ENCODE measurements at regions of chr12 and their contacts with region 1.

Region 1: GRCh38 chr12:110563702-110564640 is 19.1 kb downstream of the PPTC7 start:
- DNase-seq: no peak
- ATAC-seq: peak; percentile 35
- H3K4me3 Mint-ChIP-seq: peak overlapping the region; percentile 3
- H3K27ac Mint-ChIP-seq: peak overlapping the region; percentile 93
- H3K4me1 Mint-ChIP-seq: peaks cover 67% of the 10 kb centered on the region
- H3K27me3 Mint-ChIP-seq: no peaks in the 10 kb centered on the region
- CTCF ChIP-seq: no peak

Region 2: DNA sequence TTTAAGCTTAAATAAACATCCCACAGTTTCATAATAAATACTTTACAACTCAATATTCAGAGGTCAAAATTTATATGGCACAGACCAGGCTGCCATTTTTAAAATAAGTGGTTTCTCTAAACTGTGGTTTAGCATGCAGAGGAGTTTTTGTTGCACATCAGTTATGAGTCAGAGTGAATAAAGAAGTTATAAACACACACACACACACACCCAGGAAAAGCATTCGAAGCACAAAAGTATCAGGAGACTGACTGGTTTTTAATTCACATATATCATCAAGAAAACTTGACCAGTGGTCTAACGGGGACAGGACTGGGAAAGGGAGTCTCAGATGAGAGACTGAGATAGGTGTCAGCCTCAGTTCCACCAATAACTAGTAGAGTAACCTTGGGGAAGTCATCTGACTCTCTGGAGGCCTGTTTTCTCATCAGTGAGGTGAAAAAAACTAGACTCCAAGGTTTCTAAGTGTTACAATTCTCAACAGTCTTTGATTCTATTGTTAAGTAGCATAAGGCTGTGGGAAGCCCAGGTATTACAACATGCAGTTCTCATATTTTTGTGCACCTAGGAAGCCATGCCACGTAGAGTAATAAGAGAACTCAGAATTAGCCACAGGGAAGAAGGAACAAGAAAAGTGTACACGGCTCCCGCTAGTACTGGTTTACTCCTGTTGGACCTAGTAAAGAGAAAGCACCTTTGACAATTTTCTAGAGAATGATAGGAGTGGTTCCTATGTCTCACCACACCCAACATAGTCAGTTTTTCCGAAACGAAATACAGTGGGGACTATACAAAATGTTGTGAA is 13.9 kb after region 1 on chr12:
- CTCF ChIA-PET with region 1: interaction called, 3 read pairs
- POLR2A ChIA-PET with region 1: interaction called, 79 read pairs
- intact Hi-C with region 1: loop called (anchors 2 kb)
- DNase-seq: peak; percentile 72
- ATAC-seq: peak; percentile 60
- H3K4me3 Mint-ChIP-seq: peak overlapping the region; percentile 92
- H3K27ac Mint-ChIP-seq: peak overlapping the region; percentile 96
- H3K4me1 Mint-ChIP-seq: peaks cover 67% of the 10 kb centered on the region
- H3K27me3 Mint-ChIP-seq: no peaks in the 10 kb centered on the region
- CTCF ChIP-seq: no peak

Measured in activated CD8-positive, alpha-beta T cell treated with anti-CD3 and anti-CD28 coated beads for 36 hours (primary cell).